ENCODE measurements at regions of chr14 and their contacts with region 1.

Region 1: GRCh38 chr14:37985826-37986470 is 221.8 kb upstream of the SSTR1 start:
- DNase-seq: peak; percentile 72
- H3K4me3 Mint-ChIP-seq: no peak overlapping the region
- H3K27ac Mint-ChIP-seq: no peak overlapping the region
- H3K4me1 Mint-ChIP-seq: no peaks in the 10 kb centered on the region
- H3K27me3 Mint-ChIP-seq: no peaks in the 10 kb centered on the region
- CTCF ChIP-seq: peak; percentile 77

Region 2: GRCh38 chr14:38000340-38000739 is 14.4 kb after region 1 on chr14:
- CTCF ChIA-PET with region 1: interaction called, 12 read pairs
- POLR2A ChIA-PET with region 1: interaction called, 3 read pairs
- intact Hi-C with region 1: no loop called
- DNase-seq: no peak
- H3K4me3 Mint-ChIP-seq: no peak overlapping the region
- H3K27ac Mint-ChIP-seq: no peak overlapping the region
- H3K4me1 Mint-ChIP-seq: no peaks in the 10 kb centered on the region
- H3K27me3 Mint-ChIP-seq: no peaks in the 10 kb centered on the region
- CTCF ChIP-seq: no peak

Region 3: GRCh38 chr14:38042345-38042744 is 56.4 kb after region 1 on chr14:
- CTCF ChIA-PET with region 1: no interaction called
- POLR2A ChIA-PET with region 1: no interaction called
- intact Hi-C with region 1: no loop called
- DNase-seq: peak; percentile 37
- H3K4me3 Mint-ChIP-seq: no peak overlapping the region
- H3K27ac Mint-ChIP-seq: no peak overlapping the region
- H3K4me1 Mint-ChIP-seq: peaks cover 5% of the 10 kb centered on the region
- H3K27me3 Mint-ChIP-seq: no peaks in the 10 kb centered on the region
- CTCF ChIP-seq: no peak

Region 4: GRCh38 chr14:38078393-38078792 is 92.4 kb after region 1 on chr14:
- CTCF ChIA-PET with region 1: no interaction called
- POLR2A ChIA-PET with region 1: no interaction called
- intact Hi-C with region 1: no loop called
- DNase-seq: peak; percentile 50
- H3K4me3 Mint-ChIP-seq: no peak overlapping the region
- H3K27ac Mint-ChIP-seq: peak overlapping the region; percentile 59
- H3K4me1 Mint-ChIP-seq: peaks cover 16% of the 10 kb centered on the region
- H3K27me3 Mint-ChIP-seq: no peaks in the 10 kb centered on the region
- CTCF ChIP-seq: no peak

Region 5: GRCh38 chr14:38150072-38150471 is 164.1 kb after region 1 on chr14:
- CTCF ChIA-PET with region 1: no interaction called
- POLR2A ChIA-PET with region 1: no interaction called
- intact Hi-C with region 1: no loop called
- DNase-seq: no peak
- H3K4me3 Mint-ChIP-seq: no peak overlapping the region
- H3K27ac Mint-ChIP-seq: no peak overlapping the region
- H3K4me1 Mint-ChIP-seq: peaks cover 4% of the 10 kb centered on the region
- H3K27me3 Mint-ChIP-seq: no peaks in the 10 kb centered on the region
- CTCF ChIP-seq: no peak

Region 6: GRCh38 chr14:38187589-38188018 is 201.7 kb after region 1 on chr14:
- CTCF ChIA-PET with region 1: no interaction called
- POLR2A ChIA-PET with region 1: no interaction called
- intact Hi-C with region 1: no loop called
- DNase-seq: peak; percentile 79
- H3K4me3 Mint-ChIP-seq: no peak overlapping the region
- H3K27ac Mint-ChIP-seq: peak overlapping the region; percentile 21
- H3K4me1 Mint-ChIP-seq: peaks cover 19% of the 10 kb centered on the region
- H3K27me3 Mint-ChIP-seq: no peaks in the 10 kb centered on the region
- CTCF ChIP-seq: no peak

Region 7: GRCh38 chr14:38605193-38606114 is 619.5 kb after region 1 on chr14:
- CTCF ChIA-PET with region 1: no interaction called
- POLR2A ChIA-PET with region 1: no interaction called
- intact Hi-C with region 1: loop called (anchors 2 kb)
- DNase-seq: no peak
- H3K4me3 Mint-ChIP-seq: no peak overlapping the region
- H3K27ac Mint-ChIP-seq: no peak overlapping the region
- H3K4me1 Mint-ChIP-seq: peaks cover 5% of the 10 kb centered on the region
- H3K27me3 Mint-ChIP-seq: no peaks in the 10 kb centered on the region
- CTCF ChIP-seq: peak; percentile 20

Measured in MCF 10A (cell line).